ENCODE measurements at regions of chr16 and their contacts with region 1.

Region 1: DNA sequence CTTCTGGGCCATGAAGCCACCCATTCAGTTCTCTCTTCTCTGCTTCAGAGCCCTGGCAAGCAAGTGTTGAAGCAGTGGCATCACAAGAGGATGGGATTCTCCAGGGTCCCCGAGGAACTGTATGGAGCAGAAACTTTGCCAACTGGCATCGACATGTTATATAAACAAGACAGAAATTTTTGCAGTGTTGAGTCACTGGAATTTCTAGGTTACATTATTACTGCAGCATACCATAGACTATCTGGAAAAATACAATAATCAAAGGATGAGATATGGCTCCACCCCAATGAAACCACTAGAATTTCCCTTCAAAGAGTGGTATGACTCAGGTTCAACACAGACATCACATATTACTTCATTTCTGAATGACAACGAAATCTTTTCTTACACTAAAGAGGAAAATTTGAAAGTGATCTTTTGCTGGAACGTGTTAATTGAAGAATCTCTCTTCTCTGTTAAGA is 343.0 kb upstream of the DYNLRB2 start:
- DNase-seq: peak; percentile 93
- ATAC-seq: peak; percentile 96
- H3K4me3 ChIP-seq: no peak overlapping the region
- H3K27ac ChIP-seq: peak overlapping the region; percentile 96
- H3K4me1 ChIP-seq: peaks cover 6% of the 10 kb centered on the region
- H3K27me3 ChIP-seq: no peaks in the 10 kb centered on the region
- CTCF ChIP-seq: no peak
- POLR2A ChIP-seq: no peak
- RAD21 ChIP-seq: no peak

Region 2: DNA sequence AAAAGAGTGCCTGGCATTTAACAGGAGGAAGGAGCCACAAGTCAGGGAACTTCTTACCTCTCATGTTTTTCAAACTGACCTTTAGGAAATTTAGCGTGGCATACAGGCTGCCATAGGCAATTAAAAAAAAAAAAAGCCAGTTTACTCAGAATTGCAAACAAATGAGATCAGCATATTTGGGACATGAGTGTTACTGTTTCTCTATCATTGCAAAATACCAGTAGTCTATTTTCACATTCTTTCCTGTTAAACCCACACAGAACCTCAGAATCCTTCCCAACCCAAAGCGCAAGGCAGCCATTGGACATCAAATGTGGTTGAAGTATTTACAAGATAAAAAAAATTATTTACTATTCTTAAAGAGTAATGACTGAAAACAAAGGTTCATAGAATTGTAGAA is 23.4 kb before region 1 on chr16:
- CTCF ChIA-PET with region 1: no interaction called
- POLR2A ChIA-PET with region 1: no interaction called
- dilution Hi-C with region 1: no loop called
- in situ Hi-C with region 1: no loop called
- intact Hi-C with region 1: loop called (anchors 1 kb)
- DNase-seq: peak; percentile 89
- ATAC-seq: peak; percentile 79
- H3K4me3 ChIP-seq: no peak overlapping the region
- H3K27ac ChIP-seq: peak overlapping the region; percentile 86
- H3K4me1 ChIP-seq: peaks cover 12% of the 10 kb centered on the region; the same call in 1 of the 2 replicates
- H3K27me3 ChIP-seq: no peaks in the 10 kb centered on the region
- CTCF ChIP-seq: no peak
- POLR2A ChIP-seq: no peak
- RAD21 ChIP-seq: no peak

Region 3: GRCh38 chr16:80273635-80274538 is 76.1 kb after region 1 on chr16:
- CTCF ChIA-PET with region 1: interaction called, 3 read pairs
- POLR2A ChIA-PET with region 1: no interaction called
- dilution Hi-C with region 1: no loop called
- in situ Hi-C with region 1: no loop called
- intact Hi-C with region 1: loop called (anchors 2 kb)
- DNase-seq: peak; percentile 75
- ATAC-seq: peak; percentile 41
- H3K4me3 ChIP-seq: no peak overlapping the region
- H3K27ac ChIP-seq: no peak overlapping the region
- H3K4me1 ChIP-seq: peaks cover 5% of the 10 kb centered on the region
- H3K27me3 ChIP-seq: no peaks in the 10 kb centered on the region
- CTCF ChIP-seq: no peak
- POLR2A ChIP-seq: no peak
- RAD21 ChIP-seq: no peak

Region 4: DNA sequence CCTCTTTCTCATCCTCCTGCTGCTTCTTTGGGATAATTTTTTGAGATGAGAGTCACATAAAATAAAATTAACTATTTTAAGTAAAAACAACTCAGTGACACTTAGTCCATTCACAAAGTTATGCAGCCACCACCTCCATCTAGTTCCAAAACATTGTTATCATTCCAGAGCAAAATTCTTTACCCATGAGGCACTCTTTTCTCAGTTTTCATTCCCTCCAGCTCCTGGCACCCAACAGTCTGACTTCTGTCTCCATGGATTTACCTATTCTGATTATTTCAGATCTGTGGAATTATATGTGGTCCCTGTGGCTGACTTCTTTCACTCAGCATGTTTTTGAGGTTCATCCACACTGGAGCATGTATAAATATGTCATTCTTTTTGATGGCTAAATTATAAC is 103.1 kb after region 1 on chr16:
- CTCF ChIA-PET with region 1: no interaction called
- POLR2A ChIA-PET with region 1: no interaction called
- dilution Hi-C with region 1: no loop called
- in situ Hi-C with region 1: no loop called
- intact Hi-C with region 1: loop called (anchors 10 kb)
- DNase-seq: peak; percentile 59
- ATAC-seq: peak; percentile 82
- H3K4me3 ChIP-seq: no peak overlapping the region
- H3K27ac ChIP-seq: peak overlapping the region; percentile 95; the same call in 1 of the 2 replicates
- H3K4me1 ChIP-seq: peaks cover 25% of the 10 kb centered on the region
- H3K27me3 ChIP-seq: no peaks in the 10 kb centered on the region
- CTCF ChIP-seq: no peak
- POLR2A ChIP-seq: no peak
- RAD21 ChIP-seq: no peak

Region 5: GRCh38 chr16:81189100-81189664 is 991.4 kb after region 1 on chr16:
- CTCF ChIA-PET with region 1: interaction called, 17 read pairs
- POLR2A ChIA-PET with region 1: no interaction called
- dilution Hi-C with region 1: no loop called
- in situ Hi-C with region 1: no loop called
- intact Hi-C with region 1: no loop called
- DNase-seq: peak; percentile 48
- ATAC-seq: peak; percentile 55; the same call in 1 of the 2 replicates
- H3K4me3 ChIP-seq: no peak overlapping the region
- H3K27ac ChIP-seq: no peak overlapping the region
- H3K4me1 ChIP-seq: 0 out of 2 replicates have a peak, but pooled peaks cover 6% of the 10 kb centered on the region
- H3K27me3 ChIP-seq: peaks cover 4% of the 10 kb centered on the region
- CTCF ChIP-seq: no peak
- POLR2A ChIP-seq: no peak
- RAD21 ChIP-seq: no peak

Region 6: GRCh38 chr16:81737885-81738786 is 1540.4 kb after region 1 on chr16:
- CTCF ChIA-PET with region 1: no interaction called
- POLR2A ChIA-PET with region 1: no interaction called
- dilution Hi-C with region 1: no loop called
- in situ Hi-C with region 1: loop called (anchors 25 kb)
- intact Hi-C with region 1: no loop called
- DNase-seq: peak; percentile 60
- ATAC-seq: peak; percentile 95
- H3K4me3 ChIP-seq: no peak overlapping the region
- H3K27ac ChIP-seq: no peak overlapping the region
- H3K4me1 ChIP-seq: no peaks in the 10 kb centered on the region
- H3K27me3 ChIP-seq: peaks cover 5% of the 10 kb centered on the region; the same call in 1 of the 2 replicates
- CTCF ChIP-seq: peak; percentile 87
- POLR2A ChIP-seq: no peak
- RAD21 ChIP-seq: peak; percentile 90